Tibial artery (tissue), 4 donors: ENCODE measurements at regions of chr2 and their contacts with region 1.

Region 1: DNA sequence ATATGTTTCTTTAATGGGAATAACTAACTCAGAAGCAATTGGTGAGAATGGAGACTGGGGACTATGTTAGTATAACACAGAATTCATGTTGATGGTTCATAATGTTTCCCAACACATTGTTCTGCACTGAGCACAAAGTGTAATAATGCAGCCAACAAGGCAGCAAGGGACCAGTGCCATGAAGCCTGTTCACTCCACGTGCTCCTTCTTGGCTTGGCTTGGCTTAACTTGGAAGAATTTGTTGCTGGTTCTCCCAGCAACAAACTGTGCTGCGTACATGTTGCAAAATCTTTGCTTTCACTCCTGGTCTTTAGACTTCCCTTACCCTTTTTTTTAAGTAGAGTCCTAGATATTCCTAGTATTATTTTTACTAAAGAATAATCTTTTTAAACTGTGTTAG is 129.7 kb downstream of the MAP3K20 start:
- DNase-seq: peak; percentile 93 to 95
- H3K4me3 ChIP-seq: no peak overlapping the region
- H3K27ac ChIP-seq: peak overlapping the region; percentile 76 to 77
- H3K4me1 ChIP-seq: peaks cover 0 to 77% (median 44%) of the 10 kb centered on the region in 4 donors
- H3K27me3 ChIP-seq: no peaks in the 10 kb centered on the region
- CTCF ChIP-seq: no peak

Region 2: DNA sequence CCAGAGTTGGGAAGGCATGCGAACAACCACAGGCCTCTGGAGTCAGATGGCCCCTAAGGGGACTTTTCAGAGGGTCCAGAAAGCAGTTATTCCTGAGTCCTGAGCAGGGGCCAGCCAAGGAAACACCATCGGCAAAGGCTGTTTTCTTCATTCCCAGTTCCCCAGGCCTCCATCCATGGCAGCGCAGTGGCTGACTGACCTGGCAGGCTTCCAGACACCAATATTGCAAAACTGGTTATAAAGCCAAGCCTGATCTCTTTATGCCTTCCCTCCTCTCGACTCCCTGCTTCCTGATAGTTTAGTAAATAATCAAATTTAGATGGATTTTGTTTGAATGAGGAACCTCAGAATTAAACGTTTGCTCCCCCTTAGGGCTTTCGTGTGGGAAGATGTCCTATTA is 911.4 kb before region 1 on chr2:
- intact Hi-C with region 1: no loop called
- DNase-seq: peak in 1 of 2 donors; percentile 50
- H3K4me3 ChIP-seq: no peak overlapping the region
- H3K27ac ChIP-seq: no peak overlapping the region
- H3K4me1 ChIP-seq: peaks cover 0 to 6% (median 0%) of the 10 kb centered on the region in 4 donors
- H3K27me3 ChIP-seq: peaks cover 0 to 11% of the 10 kb centered on the region in 2 donors
- CTCF ChIP-seq: no peak

Region 3: DNA sequence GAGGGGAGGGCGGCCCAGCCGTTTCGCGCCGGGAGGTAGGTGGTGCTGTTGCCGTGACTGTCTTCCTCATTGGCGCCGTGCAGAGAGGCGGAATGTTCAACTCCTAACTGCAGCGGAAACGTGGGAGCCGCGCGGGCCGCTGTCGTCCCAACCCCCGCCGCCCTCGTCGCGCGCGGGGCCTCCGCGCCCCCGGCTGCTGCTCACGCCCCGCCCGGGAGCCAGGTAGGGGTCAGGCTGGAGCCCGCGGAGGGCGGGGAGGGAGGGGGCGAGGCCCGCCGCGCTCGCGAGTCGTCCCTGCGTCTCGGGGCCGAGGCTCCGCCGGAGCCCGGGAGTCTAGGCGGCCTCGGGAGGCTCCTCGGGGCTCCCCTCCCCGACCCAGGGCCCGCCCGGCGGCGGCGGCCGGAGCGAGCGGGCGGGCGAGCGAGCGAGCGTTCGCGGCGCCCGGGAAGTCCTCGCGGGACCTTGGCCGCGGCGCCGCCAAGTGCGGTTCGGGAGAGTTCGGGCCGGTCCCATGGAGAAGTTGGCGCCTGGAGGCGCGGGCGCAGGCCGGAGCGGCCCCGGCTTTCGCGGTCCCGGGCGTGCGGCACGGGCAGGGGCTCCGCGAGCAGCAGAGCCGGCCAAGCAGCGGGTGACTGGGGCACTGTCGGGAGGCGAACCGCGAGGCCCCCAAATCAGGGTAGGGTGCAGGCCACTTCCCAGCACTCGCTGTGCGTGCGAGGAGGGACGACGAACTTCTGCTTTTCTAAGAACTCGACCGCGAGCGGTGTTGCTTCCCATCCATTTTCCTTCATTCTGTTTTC is 129.4 kb before region 1 on chr2 and contains the start of gene MAP3K20:
- intact Hi-C with region 1: loop called (anchors 5 kb)
- DNase-seq: peak; percentile 86 to 91
- H3K4me3 ChIP-seq: peak within 1 kb of the TSS; percentile 72 to 84
- H3K27ac ChIP-seq: peak within 1 kb of the TSS; percentile 94 to 100
- H3K4me1 ChIP-seq: peaks cover 0 to 68% (median 14%) of the 10 kb centered on the region in 4 donors
- H3K27me3 ChIP-seq: no peaks in the 10 kb centered on the region
- CTCF ChIP-seq: peak; percentile 35 to 47

Region 4: DNA sequence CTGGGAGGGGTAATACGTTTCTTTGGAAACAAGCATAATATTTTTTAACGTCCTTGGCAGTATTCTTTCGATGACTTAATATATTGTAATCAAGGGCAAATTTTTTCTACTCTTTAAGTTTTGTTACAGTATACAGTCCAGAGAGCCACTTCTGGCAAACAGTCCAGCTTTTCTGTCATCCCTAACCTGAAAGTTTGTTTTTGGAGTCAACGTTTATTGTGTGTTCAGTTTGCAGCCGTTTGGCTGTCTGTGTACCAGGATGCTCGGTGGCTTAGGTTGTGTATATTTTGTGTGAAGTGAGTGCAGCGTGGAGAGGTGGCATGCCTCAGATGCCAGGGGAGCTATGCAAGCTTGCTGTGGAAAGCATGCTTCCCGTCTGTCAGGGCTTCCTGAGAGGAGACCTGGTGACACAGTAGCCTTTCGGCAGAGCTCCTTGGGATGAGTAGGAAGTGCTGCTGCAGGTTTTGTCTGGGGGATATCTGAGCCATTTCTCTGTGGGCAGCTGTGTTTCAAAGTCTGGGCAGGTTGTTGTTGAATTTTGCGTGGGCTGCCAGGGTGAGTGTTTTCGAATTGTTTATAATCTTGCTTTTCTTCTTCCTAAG is 115.0 kb before region 1 on chr2:
- intact Hi-C with region 1: loop called (anchors 5 kb)
- DNase-seq: no peak
- H3K4me3 ChIP-seq: peak overlapping the region; percentile 1 to 34
- H3K27ac ChIP-seq: peak overlapping the region; percentile 88 to 90
- H3K4me1 ChIP-seq: peaks cover 0 to 90% (median 45%) of the 10 kb centered on the region in 4 donors
- H3K27me3 ChIP-seq: no peaks in the 10 kb centered on the region
- CTCF ChIP-seq: no peak

Region 5: GRCh38 chr2:173523497-173523896 is 318.1 kb after region 1 on chr2:
- intact Hi-C with region 1: no loop called
- DNase-seq: peak in 1 of 2 donors; percentile 32
- H3K4me3 ChIP-seq: no peak overlapping the region
- H3K27ac ChIP-seq: no peak overlapping the region
- H3K4me1 ChIP-seq: no peaks in the 10 kb centered on the region
- H3K27me3 ChIP-seq: peaks cover 0 to 11% of the 10 kb centered on the region in 2 donors
- CTCF ChIP-seq: no peak